Activated CD4-positive, alpha-beta T cell treated with anti-CD3 and anti-CD28 coated beads for 36 hours (primary cell): ENCODE measurements at regions of chr14 and their contacts with region 1.

Region 1: GRCh38 chr14:24215495-24216344 is at the start of gene MDP1:
- DNase-seq: peak; percentile 93
- ATAC-seq: peak; percentile 76
- H3K4me3 Mint-ChIP-seq: peak within 1 kb of the TSS; percentile 92
- H3K27ac Mint-ChIP-seq: peak within 1 kb of the TSS; percentile 95
- H3K4me1 Mint-ChIP-seq: peaks cover 44% of the 10 kb centered on the region
- H3K27me3 Mint-ChIP-seq: no peaks in the 10 kb centered on the region
- total RNA-seq, gene MDP1: 4.5 to 11.7 TPM

Region 2: GRCh38 chr14:24071144-24071697 is 144.5 kb before region 1 on chr14 and contains the start of gene CPNE6:
- CTCF ChIA-PET with region 1: no interaction called
- POLR2A ChIA-PET with region 1: no interaction called
- intact Hi-C with region 1: no loop called
- DNase-seq: peak; percentile 81
- ATAC-seq: peak; percentile 96
- H3K4me3 Mint-ChIP-seq: no peak within 1 kb of the TSS
- H3K27ac Mint-ChIP-seq: peak within 1 kb of the TSS; percentile 10
- H3K4me1 Mint-ChIP-seq: peaks cover 8% of the 10 kb centered on the region
- H3K27me3 Mint-ChIP-seq: peaks cover 9% of the 10 kb centered on the region
- total RNA-seq, gene CPNE6: not detected

Region 3: DNA sequence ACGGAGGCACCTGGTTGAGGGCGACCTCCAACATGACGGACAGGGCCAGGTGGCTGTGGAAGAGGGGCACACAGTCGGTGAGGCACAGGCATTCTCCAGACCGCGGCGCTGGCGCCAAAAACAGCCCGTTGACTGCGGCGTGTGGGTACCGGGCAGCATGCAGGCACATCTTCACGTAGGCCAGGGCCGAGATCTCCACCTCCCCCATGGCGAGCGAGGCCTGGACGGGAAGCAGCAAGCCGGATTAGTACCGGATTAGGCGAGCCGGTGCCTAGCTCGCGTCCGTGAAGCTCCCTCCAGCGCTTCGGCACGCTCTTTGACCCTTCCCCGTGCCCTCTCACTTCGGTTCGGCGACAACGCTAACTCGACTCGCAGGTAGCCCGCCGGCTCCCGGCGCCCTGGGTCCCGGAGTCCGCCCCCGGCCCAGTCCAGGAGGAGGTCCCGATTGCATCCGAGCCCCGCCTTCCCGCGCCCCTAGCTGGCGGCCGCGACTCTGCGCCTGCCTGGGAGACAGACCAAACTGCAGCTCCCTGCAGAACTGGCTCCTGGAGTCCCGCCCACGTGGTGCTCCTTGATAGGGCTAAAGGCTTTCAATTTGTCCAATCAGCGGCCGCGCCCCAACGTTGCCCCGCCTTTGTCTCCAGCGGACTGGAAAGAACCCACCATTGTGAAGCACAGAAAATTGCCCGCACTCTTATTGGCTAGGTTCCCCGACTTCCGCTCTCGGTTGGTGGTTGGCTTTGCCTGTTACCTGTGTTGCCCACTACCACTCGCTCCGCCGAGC is 74.4 kb before region 1 on chr14 and contains the start of gene EMC9:
- CTCF ChIA-PET with region 1: interaction called, 3 read pairs
- POLR2A ChIA-PET with region 1: interaction called, 3 read pairs
- intact Hi-C with region 1: loop called (anchors 1 to 2 kb)
- DNase-seq: peak; percentile 100
- ATAC-seq: peak; percentile 87
- H3K4me3 Mint-ChIP-seq: peak within 1 kb of the TSS; percentile 88
- H3K27ac Mint-ChIP-seq: peak within 1 kb of the TSS; percentile 97
- H3K4me1 Mint-ChIP-seq: peaks cover 66% of the 10 kb centered on the region
- H3K27me3 Mint-ChIP-seq: no peaks in the 10 kb centered on the region
- total RNA-seq, gene EMC9: 36.9 to 46.7 TPM

Region 4: DNA sequence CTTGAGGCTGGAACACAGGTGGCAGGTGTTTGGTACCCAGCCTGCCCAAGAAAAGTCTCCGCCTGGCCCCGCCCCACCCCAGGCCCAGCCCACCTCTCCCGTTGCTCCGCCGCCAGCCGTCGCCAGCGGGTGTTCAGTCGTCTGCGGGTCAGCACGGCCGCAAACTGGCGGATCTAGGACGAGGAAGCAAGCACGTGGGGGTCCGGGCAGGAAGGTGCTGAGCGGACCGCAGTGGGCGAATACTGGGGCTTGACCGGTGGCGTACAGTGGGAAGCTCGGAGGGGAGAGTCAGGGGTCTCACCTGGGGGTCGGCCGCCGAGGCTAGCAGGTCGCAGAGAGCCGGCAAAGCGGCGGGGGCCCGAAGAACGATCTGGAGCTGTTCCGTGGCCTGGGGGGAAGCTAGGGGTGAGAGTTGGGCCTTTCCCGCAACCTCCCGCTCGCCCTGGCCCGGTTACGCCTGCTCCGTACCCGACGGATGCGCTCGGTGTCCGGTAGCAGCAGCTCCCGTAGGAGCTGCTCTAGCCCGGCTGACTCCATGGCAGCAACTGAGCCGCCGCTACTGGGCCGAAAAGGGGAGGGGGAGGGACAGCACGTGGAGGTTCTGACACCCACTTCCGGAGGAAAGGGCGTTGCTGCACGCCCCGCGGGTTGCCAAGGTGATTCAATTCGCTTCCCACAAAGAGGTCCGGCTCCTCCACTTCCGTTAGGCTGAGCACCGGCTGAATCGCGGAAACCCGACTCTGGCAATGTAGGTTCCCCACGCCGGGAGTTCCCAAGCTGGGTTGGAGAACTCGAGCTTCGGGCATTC is 27.3 kb before region 1 on chr14 and contains the start of gene IPO4:
- CTCF ChIA-PET with region 1: interaction called, 13 read pairs
- POLR2A ChIA-PET with region 1: interaction called, 8 read pairs
- intact Hi-C with region 1: loop called in 1 of 2 experiments (anchors 1 kb)
- DNase-seq: peak; percentile 97
- ATAC-seq: peak; percentile 92
- H3K4me3 Mint-ChIP-seq: peak within 1 kb of the TSS; percentile 89
- H3K27ac Mint-ChIP-seq: peak within 1 kb of the TSS; percentile 83
- H3K4me1 Mint-ChIP-seq: peaks cover 40% of the 10 kb centered on the region
- H3K27me3 Mint-ChIP-seq: no peaks in the 10 kb centered on the region
- total RNA-seq, gene IPO4: 73.4 to 73.7 TPM

Region 5: DNA sequence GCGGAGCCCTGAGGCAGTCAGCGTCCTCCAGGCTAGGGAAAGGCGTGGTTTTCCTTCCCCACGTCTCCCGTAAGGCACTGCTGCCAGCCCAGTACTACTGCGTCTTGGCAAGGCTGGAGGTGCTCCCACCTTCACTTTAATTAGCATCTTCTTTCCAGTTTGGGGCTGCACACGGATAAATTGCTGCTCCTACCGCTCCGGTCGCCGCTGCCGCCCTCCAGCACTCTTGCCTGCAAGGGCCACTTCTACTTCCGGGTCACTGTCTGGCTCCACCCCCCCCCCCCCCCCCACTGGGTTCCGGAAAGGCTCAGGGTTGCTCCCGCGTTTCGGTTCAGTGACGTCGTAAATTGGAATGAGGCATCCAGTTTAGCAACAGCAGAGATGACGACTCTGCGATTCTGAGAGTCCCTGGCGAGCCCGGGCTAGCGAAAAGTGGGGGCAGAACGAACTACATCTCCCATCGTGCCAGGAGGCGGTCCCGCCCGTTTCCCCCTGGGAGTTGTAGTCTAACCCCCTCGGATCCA is 16.5 kb after region 1 on chr14 and contains the start of gene NEDD8:
- CTCF ChIA-PET with region 1: interaction called, 11 read pairs
- POLR2A ChIA-PET with region 1: interaction called, 3 read pairs
- intact Hi-C with region 1: loop called (anchors 1 kb)
- DNase-seq: peak; percentile 96
- ATAC-seq: peak; percentile 91
- H3K4me3 Mint-ChIP-seq: peak within 1 kb of the TSS; percentile 78
- H3K27ac Mint-ChIP-seq: peak within 1 kb of the TSS; percentile 89
- H3K4me1 Mint-ChIP-seq: peaks cover 58% of the 10 kb centered on the region
- H3K27me3 Mint-ChIP-seq: no peaks in the 10 kb centered on the region
- total RNA-seq, gene NEDD8: 187 to 217 TPM

Region 6: GRCh38 chr14:24442273-24443052 is 226.7 kb after region 1 on chr14 and contains the start of gene SDR39U1:
- CTCF ChIA-PET with region 1: no interaction called
- POLR2A ChIA-PET with region 1: no interaction called
- intact Hi-C with region 1: loop called (anchors 1 to 5 kb)
- DNase-seq: peak; percentile 98
- ATAC-seq: peak; percentile 92
- H3K4me3 Mint-ChIP-seq: peak within 1 kb of the TSS; percentile 97
- H3K27ac Mint-ChIP-seq: peak within 1 kb of the TSS; percentile 99
- H3K4me1 Mint-ChIP-seq: peaks cover 41% of the 10 kb centered on the region
- H3K27me3 Mint-ChIP-seq: no peaks in the 10 kb centered on the region
- total RNA-seq, gene SDR39U1: 40.9 to 47.8 TPM